ENCODE measurements at regions of chr1 and their contacts with region 1.

Region 1: DNA sequence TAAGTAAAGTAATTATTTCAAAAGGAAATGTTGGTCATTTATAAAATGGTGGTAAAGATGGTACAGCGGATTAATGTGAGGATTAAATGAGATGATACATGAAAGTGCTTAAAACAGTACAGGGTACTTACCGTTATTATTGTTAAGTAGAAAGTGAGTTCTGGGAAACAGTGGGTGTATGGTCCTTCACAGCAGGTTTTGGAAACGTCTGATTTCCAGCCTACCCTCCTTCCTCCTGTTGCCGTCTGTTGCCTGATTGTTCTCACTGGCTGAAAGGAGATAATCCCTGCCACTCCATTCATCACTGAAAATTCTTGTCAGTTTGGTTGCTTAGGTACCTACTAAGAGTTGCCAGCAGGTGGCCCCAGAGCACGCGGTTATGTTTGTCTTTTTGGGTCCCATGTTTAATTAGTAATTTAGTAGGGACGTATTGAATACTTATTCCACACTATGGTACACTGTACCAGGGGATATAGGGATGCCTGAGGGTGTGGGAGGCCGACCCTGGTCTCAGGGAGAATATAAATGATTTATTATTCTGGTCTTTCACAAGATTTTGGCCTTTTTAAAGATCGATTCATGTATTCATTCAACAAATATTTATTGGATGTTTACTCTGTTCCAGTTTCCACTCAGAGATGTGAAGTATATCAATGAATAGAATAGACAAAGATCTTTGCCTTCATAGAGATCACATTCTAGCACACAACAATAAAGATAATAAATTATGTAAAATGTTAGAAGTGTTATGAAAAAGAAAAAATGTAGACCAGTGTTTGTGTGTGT is 30.8 kb upstream of the RPTN start:
- H3K4me3 ChIP-seq: peak overlapping the region; percentile 32; the same call in 1 of the 2 replicates
- H3K27ac ChIP-seq: no peak overlapping the region
- H3K4me1 ChIP-seq: no peaks in the 10 kb centered on the region
- CTCF ChIP-seq: peak; percentile 34; the same call in 1 of the 2 replicates

Region 2: GRCh38 chr1:151984313-151984956 is 205.4 kb before region 1 on chr1:
- CTCF ChIA-PET with region 1: no interaction called
- POLR2A ChIA-PET with region 1: no interaction called
- H3K4me3 ChIP-seq: no peak overlapping the region
- H3K27ac ChIP-seq: no peak overlapping the region
- H3K4me1 ChIP-seq: peaks cover 32% of the 10 kb centered on the region
- CTCF ChIP-seq: no peak

Region 3: DNA sequence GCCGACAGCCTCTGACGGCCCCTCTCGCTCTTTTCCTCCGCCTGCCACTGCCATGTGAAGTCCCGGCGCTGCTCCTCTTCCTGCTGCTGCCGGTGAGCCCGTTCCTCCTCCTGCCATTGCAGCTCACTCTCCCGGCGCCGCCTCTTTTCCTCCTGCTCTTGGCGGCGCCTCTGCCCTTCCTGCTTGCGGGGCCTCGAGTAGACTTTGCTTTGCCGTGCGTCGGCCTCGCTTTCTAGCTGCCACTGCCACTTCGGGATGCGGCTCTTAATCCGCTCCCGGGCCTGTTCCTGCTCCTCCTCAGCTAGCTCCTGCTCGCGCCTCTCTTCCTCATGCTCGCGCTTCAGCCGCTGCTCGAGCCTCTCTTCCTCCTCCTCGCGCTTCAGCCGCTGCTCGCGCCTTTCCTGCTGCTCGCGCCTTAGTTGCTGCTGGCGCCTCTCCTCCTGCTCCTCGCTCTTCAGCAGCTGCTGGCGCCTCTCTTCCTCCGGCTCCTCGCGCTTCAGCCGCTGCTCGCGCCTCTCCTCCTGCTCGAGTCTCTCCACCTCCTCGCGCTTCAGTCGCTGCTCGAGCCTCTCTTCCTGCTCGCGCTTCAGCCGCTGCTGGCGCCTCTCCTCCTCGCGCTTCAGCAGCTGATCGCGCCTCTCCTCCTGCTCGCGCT is 78.9 kb before region 1 on chr1:
- CTCF ChIA-PET with region 1: interaction called, 66 read pairs
- POLR2A ChIA-PET with region 1: no interaction called
- H3K4me3 ChIP-seq: peak overlapping the region; percentile 39
- H3K27ac ChIP-seq: peak overlapping the region; percentile 17; the same call in 1 of the 2 replicates
- H3K4me1 ChIP-seq: peaks cover 4% of the 10 kb centered on the region; the same call in 1 of the 2 replicates
- CTCF ChIP-seq: peak; percentile 1; the same call in 1 of the 2 replicates

Region 4: DNA sequence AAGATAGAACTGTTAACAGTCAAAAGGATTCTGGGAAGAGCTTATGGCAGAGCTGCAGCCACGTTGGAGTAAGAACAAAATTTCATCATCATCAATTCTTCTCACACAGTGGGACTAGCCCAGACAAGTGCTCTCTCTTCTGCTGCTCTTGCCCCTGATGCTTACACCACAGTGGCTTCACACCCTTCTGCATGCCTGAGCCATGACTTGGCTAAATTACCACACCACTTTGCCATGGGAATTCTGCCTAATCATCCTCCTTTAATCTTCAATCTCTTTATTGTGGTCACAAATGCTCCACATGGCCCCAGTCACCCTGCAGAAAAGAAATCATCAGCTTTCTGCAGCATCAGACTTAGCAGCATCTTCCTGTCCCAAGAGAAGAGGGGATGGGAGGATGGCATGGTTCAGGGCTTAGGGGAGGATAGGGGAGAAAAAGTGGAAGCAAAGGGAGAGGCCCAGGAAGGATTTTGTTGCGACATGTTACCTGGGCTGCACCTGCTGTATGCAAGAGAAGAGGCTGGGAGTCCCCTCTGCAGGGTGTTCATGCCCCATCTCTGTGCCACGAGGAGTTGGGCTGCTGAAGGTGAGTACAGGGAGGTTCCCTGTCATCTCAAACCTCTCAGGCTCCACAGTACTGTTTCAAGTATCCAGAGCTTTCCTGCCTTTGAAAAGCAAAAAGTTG is 21.9 kb before region 1 on chr1:
- CTCF ChIA-PET with region 1: interaction called, 11 read pairs
- POLR2A ChIA-PET with region 1: no interaction called
- H3K4me3 ChIP-seq: no peak overlapping the region
- H3K27ac ChIP-seq: no peak overlapping the region
- H3K4me1 ChIP-seq: no peaks in the 10 kb centered on the region
- CTCF ChIP-seq: no peak

Region 5: DNA sequence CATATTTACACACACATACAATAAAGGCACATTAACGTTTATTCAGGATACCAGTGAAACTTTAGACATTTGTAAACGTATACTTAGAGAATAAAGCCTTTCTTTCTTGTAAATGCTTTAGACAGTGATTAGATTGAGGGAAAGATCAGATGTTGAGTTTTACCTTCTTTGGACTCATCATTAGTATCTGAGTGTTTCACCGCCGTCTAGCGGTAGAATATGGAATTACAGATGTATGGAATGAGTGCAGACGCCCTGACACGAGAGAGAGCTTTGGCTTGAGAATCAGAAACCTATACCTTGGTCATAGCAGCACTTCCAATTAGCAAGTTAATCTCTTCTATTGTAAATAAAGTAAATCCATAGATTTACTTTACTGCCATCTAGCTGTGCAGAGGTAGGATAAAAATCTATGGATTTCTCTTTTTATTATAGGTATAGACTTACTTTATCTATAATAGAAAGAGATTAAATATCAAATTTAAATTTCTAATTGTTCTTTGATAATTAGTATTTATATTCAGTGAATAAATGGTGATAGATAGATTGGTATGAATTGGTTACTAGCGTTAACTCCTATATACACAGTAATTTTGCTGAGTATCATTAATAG is 157.4 kb after region 1 on chr1:
- CTCF ChIA-PET with region 1: interaction called, 16 read pairs
- POLR2A ChIA-PET with region 1: no interaction called
- H3K4me3 ChIP-seq: no peak overlapping the region
- H3K27ac ChIP-seq: no peak overlapping the region
- H3K4me1 ChIP-seq: no peaks in the 10 kb centered on the region
- CTCF ChIP-seq: no peak

Region 6: DNA sequence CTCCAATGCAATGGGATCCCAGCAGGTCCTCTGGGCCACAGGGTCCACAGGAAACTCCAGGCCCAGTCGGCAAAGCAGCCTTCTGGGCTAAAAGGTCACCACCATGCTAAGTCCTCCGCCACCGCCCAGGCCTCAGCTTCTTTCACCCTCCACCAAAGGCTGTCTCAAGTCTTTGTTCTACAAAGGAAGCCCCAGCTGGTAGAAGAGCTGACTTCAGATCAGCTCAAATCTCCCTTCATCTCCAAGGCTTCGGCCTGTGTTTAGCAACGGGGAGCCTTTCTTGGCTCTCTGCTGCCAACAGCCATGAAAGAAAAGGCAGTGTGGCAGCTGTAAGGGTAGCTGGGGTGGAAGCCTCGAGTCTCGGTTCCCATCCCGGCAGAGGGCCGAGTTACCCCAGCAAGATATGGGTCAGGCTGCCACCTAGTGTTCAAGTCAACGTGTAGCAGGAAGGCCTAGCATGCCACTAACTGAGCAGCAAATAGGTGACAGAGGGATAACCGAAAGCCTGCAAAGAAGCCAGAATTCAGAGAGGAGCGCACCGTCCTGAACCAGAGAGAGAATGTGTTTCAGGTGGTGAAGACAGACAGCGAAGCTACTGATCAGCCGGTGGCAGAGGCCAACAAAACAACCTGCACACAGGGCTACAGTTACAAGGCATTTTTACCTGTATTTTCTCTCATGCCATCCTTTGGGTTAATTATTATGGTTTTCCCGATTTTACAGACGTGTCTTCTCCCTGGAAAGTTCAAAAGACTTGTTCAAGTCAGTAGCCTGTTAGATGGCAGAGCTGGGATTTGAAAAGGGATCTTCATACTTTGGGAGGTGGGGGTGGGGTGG is 251.0 kb after region 1 on chr1:
- CTCF ChIA-PET with region 1: interaction called, 16 read pairs
- POLR2A ChIA-PET with region 1: no interaction called
- H3K4me3 ChIP-seq: no peak overlapping the region
- H3K27ac ChIP-seq: no peak overlapping the region
- H3K4me1 ChIP-seq: no peaks in the 10 kb centered on the region
- CTCF ChIP-seq: peak; percentile 79